Activated CD8-positive, alpha-beta T cell treated with anti-CD3 and anti-CD28 coated beads, Interleukin-2, amount 10 ng/mL, durations not matched to agents 7 days and 5 days (primary cell): ENCODE measurements at regions of chr12 and their contacts with region 1.

Region 1: GRCh38 chr12:123075646-123076171 is 75.2 kb downstream of the PITPNM2 start:
- DNase-seq: peak; percentile 90
- ATAC-seq: peak; percentile 86
- H3K4me3 Mint-ChIP-seq: peak overlapping the region; percentile 82
- H3K27ac Mint-ChIP-seq: peak overlapping the region; percentile 98
- H3K4me1 Mint-ChIP-seq: peaks cover 55% of the 10 kb centered on the region
- H3K27me3 Mint-ChIP-seq: no peaks in the 10 kb centered on the region

Region 2: DNA sequence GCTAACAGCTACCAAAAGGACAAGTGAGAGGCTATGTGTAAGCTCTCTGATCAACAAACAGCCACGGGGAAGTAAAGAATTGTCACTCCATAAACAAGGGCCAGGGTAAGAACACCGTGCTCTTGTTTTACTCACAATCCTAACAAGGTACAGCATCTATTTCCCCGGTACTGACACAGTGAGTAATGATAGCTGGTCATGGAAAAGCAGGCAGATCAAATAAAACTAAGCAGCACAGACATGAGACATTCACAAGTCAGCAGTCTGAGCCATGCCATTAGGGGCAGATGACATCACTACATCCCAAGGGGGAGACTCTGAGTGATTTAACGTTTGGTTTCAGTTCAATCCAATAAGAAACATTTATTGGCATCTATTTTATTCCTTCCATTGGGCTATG is 40.8 kb before region 1 on chr12:
- CTCF ChIA-PET with region 1: interaction called, 15 read pairs
- POLR2A ChIA-PET with region 1: no interaction called
- DNase-seq: no peak
- ATAC-seq: no peak
- H3K4me3 Mint-ChIP-seq: no peak overlapping the region
- H3K27ac Mint-ChIP-seq: no peak overlapping the region
- H3K4me1 Mint-ChIP-seq: peaks cover 23% of the 10 kb centered on the region
- H3K27me3 Mint-ChIP-seq: no peaks in the 10 kb centered on the region

Region 3: DNA sequence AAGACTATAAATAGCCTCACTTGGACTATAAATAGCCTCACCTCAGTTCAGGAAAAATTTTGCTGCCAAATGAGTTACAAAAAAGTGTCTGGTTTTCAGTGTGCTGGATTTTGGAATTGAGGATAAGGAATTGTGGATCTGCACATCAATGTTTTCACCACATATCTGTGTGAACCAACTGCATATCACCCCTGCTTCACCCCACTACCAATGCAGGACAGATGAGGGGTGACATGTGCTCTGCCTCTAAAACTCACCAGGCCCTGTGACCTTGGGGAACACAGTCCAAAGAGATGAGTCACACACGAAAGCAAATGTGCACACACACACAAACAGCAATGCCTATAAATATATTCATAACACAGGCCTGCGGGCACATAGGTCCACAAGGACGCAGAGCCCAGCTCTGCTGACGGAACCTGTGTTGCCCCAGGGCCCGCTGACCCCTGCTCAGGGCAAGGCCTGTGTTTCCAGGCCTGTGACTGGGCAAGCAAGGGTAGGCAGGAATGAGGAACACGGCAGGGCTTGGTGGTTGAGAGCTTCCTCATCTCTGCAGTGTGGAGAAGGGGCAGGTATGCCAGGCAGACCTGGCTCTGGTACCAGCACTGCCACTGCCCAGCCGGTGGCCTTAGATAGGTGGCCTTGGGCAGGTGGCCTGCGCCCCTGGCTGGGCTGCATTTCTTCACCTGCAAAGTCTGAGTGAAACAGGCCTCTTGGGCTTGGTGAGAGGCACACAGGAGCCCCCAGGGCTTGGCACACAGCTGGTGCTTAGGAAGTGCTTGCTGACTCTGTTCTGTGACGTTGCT is 12.8 kb before region 1 on chr12:
- CTCF ChIA-PET with region 1: interaction called, 30 read pairs
- POLR2A ChIA-PET with region 1: interaction called, 15 read pairs
- DNase-seq: no peak
- ATAC-seq: no peak
- H3K4me3 Mint-ChIP-seq: no peak overlapping the region
- H3K27ac Mint-ChIP-seq: no peak overlapping the region
- H3K4me1 Mint-ChIP-seq: peaks cover 50% of the 10 kb centered on the region
- H3K27me3 Mint-ChIP-seq: no peaks in the 10 kb centered on the region

Region 4: DNA sequence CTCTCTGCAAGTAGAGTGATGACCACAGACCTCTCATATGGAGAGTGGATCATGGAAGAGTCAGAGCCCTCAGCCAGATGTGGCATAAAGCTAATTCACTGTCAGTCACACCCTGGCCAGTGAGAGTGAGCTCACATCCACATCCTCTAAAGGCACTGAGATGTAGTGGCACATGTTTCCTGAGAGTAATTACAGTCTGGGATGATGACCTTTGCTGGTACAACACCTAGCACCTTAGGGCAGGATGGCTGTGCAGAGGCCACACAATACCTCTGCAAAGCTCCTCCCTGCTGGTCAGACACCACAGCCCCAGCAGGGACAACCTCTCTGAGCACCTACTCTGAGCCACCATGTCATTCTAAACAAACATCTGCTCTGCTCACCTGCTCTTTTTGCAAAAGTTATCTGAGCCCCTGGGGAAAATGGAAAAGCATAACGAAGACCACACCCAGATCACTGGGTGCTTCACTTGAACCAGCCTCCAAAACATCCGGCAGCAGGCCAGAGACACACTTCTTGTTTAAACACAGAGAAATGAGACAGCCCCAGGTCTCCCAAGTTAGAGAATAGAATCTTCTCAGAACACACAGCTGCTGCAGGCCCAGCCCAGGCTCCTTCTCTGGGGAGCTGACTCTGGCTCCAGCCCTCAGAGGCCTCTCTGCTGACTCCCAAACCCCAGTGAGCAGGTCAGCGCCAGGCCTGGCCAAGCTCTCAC is 44.9 kb after region 1 on chr12:
- CTCF ChIA-PET with region 1: interaction called, 32 read pairs
- POLR2A ChIA-PET with region 1: interaction called, 40 read pairs
- DNase-seq: peak; percentile 54
- ATAC-seq: peak; percentile 61
- H3K4me3 Mint-ChIP-seq: peak overlapping the region; percentile 26
- H3K27ac Mint-ChIP-seq: peak overlapping the region; percentile 93
- H3K4me1 Mint-ChIP-seq: peaks cover 47% of the 10 kb centered on the region
- H3K27me3 Mint-ChIP-seq: no peaks in the 10 kb centered on the region

Region 5: DNA sequence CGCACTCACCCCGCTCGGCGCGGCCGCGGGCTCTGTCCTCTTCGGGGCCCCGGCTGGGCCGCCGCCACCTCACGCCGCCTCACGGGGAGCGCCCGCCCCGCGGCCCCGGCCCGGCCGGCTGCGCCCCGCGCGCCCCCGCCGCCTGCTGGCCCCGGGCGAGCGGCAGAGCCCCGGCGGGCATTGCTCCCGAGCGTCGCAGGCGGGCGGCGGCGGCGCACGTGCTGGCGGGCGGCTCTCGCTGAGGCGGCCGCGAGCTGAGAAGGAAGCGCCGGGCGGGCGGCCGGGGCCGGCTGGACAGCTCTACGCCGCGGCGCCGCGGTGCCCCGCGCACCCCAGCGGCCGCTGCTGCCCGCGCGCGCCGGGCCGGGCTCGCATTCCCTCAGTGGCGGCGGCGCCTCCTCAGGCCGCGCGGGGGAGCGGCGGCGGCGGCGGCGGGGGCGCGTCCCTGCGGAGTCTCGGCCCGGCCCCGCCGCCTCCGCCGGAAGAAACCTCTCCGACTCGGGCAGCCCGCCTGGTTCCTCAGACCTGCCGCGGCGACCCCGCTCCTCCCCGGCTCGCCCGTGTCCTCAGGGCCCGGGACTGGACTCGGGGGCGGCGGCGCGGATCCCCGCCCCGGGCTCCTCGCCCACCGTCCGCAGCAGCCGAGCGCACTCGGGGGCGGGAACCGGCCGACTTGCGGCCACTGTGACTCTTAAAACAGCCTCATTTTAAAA is 75.2 kb after region 1 on chr12 and contains the start of gene PITPNM2:
- CTCF ChIA-PET with region 1: interaction called, 25 read pairs
- POLR2A ChIA-PET with region 1: interaction called, 18 read pairs
- DNase-seq: peak; percentile 68
- ATAC-seq: peak; percentile 88
- H3K4me3 Mint-ChIP-seq: peak within 1 kb of the TSS; percentile 78
- H3K27ac Mint-ChIP-seq: peak within 1 kb of the TSS; percentile 75
- H3K4me1 Mint-ChIP-seq: peaks cover 39% of the 10 kb centered on the region
- H3K27me3 Mint-ChIP-seq: peaks cover 10% of the 10 kb centered on the region
- total RNA-seq, gene PITPNM2: 17.7 to 18.3 TPM